HEK293 (cell line): ENCODE measurements at regions of chr13 and their contacts with region 1.

Region 1: DNA sequence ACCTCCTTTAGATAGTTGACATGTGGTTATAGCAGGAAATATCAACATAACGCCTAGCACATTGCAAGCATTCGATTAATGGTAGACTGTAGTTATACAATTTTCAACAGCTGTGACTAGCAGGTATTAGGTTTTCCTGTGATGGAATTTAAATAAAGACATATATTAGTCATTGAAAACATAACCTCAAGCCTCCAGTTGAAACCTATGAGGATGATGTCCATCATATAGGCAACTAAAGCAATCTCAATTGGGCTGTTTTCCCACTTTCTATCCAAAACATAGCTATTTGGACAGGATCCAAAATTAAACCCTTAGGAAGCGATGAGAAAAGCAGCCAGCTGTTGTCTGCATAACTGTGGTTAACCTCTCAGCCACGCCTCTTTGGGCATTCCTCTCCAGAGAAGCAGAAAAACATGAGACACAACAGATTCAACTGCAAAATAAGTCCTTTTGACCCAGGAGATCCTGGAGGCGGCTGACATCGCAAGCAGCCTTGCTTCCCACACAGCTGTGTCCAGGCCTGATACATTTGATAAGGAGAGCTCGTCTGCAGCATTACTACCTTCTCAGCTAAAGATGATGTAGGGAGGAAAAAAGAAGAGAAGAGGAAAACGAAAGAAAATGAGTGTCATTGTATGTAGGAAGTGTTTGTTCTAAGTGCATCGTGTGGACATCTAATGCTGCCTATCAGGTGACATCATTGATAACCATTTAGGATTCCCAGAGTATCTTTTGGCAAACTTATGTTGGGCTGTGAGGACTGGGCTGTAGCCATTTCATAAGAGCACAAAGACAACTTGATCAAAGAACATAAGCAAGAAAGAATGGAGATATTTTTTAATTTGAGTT is 51.9 kb upstream of the UBL3 start:
- H3K4me3 ChIP-seq: no peak overlapping the region
- H3K27ac ChIP-seq: no peak overlapping the region
- H3K4me1 ChIP-seq: peaks cover 8% of the 10 kb centered on the region; the same call in 1 of the 2 replicates
- CTCF ChIP-seq: no peak

Region 2: GRCh38 chr13:29850224-29850898 is 52.0 kb before region 1 on chr13 and contains the start of gene UBL3:
- CTCF ChIA-PET with region 1: interaction called, 3 read pairs
- POLR2A ChIA-PET with region 1: interaction called, 13 read pairs
- H3K4me3 ChIP-seq: peak within 1 kb of the TSS; percentile 81
- H3K27ac ChIP-seq: peak within 1 kb of the TSS; percentile 88
- H3K4me1 ChIP-seq: peaks cover 5% of the 10 kb centered on the region
- CTCF ChIP-seq: no peak

Region 3: DNA sequence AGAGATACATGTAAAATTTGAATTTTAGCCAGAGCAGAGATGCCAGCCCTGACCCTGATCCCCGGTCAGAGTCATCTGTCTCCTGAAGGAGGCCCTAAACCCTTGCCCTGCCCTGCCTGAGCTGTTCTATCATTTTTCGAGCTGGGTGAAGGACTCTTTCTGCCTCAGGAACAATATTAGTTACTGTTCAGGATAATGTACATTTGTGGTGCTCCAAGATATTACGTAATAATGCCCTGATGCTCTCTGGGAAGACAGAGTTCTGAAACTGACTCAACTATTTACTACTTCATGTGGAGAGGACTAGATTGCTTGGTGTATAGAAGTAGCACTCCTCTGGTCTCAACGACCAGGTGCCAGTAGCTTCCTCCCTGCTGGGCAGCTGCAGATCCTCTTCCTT is 14.0 kb before region 1 on chr13:
- CTCF ChIA-PET with region 1: no interaction called
- POLR2A ChIA-PET with region 1: no interaction called
- H3K4me3 ChIP-seq: no peak overlapping the region
- H3K27ac ChIP-seq: no peak overlapping the region
- H3K4me1 ChIP-seq: no peaks in the 10 kb centered on the region
- CTCF ChIP-seq: no peak